HCT116 (cell line): ENCODE measurements at regions of chr4 and their contacts with region 1.

Region 1: GRCh38 chr4:112604589-112604988 is 32.1 kb downstream of the ZGRF1 start:
- DNase-seq: peak; percentile 18
- ATAC-seq: peak; percentile 88
- H3K4me3 ChIP-seq: no peak overlapping the region
- H3K27ac ChIP-seq: no peak overlapping the region
- H3K4me1 ChIP-seq: no peaks in the 10 kb centered on the region
- H3K27me3 ChIP-seq: no peaks in the 10 kb centered on the region
- CTCF ChIP-seq: peak; percentile 64 to 70 (median 69)
- POLR2A ChIP-seq: no peak
- RAD21 ChIP-seq: peak; percentile 83

Region 2: DNA sequence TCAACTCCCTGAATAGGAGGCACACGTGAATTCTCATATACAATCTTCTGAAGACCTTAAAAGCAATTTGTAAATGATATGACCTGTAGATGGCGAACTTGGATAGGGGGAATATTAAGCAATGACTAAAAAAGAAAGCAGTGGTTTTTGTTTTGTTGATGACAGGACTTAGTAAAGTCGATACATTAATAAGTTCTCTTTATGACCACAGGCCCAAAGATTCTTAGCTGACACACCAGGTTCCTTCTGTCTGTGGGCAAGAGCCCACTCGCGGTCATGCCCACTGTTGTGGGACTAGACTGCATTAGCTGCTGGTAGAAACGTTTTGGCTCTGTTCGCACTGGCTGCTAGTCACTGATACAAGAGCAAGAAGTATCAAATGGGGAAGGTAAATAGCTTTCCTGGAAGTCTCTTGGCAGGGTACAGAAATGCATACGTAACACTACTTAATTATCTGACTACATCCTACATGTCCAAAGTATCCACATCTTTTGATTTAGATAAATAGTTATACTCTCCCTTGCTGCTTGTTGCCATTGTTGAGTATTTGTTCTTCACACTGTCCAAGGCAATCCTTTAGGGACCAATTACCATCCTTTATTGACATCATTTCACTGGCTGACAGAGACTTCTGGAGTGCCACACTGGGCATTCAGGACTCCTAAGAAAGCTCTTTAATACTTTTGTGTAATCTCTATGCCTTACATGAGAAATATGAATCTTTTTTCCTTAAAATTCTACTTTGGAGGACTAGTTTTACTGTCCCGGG is 276.4 kb before region 1 on chr4:
- CTCF ChIA-PET with region 1: interaction called, 8 read pairs
- POLR2A ChIA-PET with region 1: no interaction called
- RAD21 ChIA-PET with region 1: no interaction called
- intact Hi-C with region 1: loop called (anchors 1 kb)
- DNase-seq: peak; percentile 32
- ATAC-seq: peak; percentile 63; the same call in 1 of the 2 replicates
- H3K4me3 ChIP-seq: no peak overlapping the region
- H3K27ac ChIP-seq: no peak overlapping the region
- H3K4me1 ChIP-seq: no peaks in the 10 kb centered on the region
- H3K27me3 ChIP-seq: no peaks in the 10 kb centered on the region
- CTCF ChIP-seq: peak; percentile 37 to 67 (median 62); a peak in 5 of 6 replicates
- POLR2A ChIP-seq: no peak
- RAD21 ChIP-seq: peak; percentile 73